GM23248 (cell line): ENCODE measurements at regions of chr1 and their contacts with region 1.

Region 1: DNA sequence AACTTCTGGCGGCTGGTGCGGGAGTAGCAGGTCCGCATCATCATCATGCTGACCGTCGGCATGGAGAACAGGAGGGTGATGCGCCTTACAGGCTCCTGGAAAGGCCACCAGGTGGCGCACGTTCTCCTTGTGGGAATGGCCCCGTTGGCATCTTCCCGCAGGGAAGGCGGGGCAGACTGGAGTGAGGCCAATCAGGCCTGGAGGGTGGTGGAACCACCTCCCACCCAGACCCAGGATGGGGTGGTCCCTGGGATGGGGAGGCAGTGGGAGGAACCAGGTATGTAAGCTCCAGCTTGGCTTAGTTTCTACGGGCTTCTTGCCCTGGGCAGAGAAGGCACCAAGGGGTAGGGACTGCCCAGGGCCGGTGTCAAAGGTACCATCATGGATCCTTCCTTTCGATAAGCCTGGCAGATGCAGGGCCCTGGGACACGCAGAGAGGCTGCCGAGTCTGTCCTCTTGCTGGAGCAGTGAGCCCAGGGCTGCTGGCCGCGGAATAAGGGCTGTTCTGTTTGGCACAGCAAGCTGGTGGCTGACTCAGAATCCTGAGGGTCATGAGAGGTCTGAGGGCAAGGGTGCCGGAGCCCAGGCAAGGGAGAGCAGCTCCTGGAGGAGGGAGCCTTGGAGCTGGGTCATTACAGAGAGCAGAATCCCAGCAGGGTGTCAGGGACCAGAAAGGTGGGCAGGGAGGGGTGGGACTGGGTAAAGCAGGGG is 8.7 kb upstream of the LGR6 start:
- DNase-seq: peak; percentile 94
- H3K4me3 ChIP-seq: no peak overlapping the region
- H3K27ac ChIP-seq: no peak overlapping the region
- H3K4me1 ChIP-seq: no peaks in the 10 kb centered on the region
- H3K27me3 ChIP-seq: peaks cover 10% of the 10 kb centered on the region; the same call in 1 of the 2 replicates

Region 2: GRCh38 chr1:202311875-202312635 is 127.2 kb after region 1 on chr1:
- in situ Hi-C with region 1: loop called (anchors 5 kb)
- DNase-seq: no peak
- H3K4me3 ChIP-seq: no peak overlapping the region
- H3K27ac ChIP-seq: no peak overlapping the region
- H3K4me1 ChIP-seq: no peaks in the 10 kb centered on the region
- H3K27me3 ChIP-seq: peaks cover 39% of the 10 kb centered on the region